ENCODE measurements at regions of chr15 and their contacts with region 1.

Region 1: DNA sequence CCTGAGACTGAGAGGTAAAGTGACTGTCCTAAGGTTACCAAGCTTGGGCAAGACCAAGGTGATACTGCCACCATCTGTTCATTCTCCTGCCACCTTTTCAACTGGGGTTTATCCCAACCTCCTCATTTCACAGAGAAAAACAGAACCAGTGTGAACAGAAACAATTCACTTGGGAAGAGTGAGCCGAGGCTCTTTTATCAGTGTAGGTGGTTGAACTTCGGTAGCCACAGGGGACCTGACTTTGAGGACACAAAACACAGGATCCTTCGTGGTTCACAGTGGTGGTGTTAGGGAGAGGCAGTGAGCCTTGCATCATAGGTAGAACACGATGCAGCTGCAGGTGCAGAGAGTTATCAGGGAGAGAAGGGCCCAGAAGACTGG is 72.8 kb upstream of the ICE2 start:
- DNase-seq: peak; percentile 49
- H3K4me3 Mint-ChIP-seq: peak overlapping the region; percentile 31
- H3K27ac Mint-ChIP-seq: peak overlapping the region; percentile 23
- H3K4me1 Mint-ChIP-seq: peaks cover 22% of the 10 kb centered on the region
- H3K27me3 Mint-ChIP-seq: no peaks in the 10 kb centered on the region
- CTCF ChIP-seq: peak; percentile 25

Region 2: GRCh38 chr15:60477916-60478565 is 73.7 kb before region 1 on chr15:
- CTCF ChIA-PET with region 1: no interaction called
- intact Hi-C with region 1: loop called (anchors 2 kb)
- DNase-seq: no peak
- H3K4me3 Mint-ChIP-seq: peak overlapping the region; percentile 98
- H3K27ac Mint-ChIP-seq: peak overlapping the region; percentile 97
- H3K4me1 Mint-ChIP-seq: peaks cover 48% of the 10 kb centered on the region
- H3K27me3 Mint-ChIP-seq: no peaks in the 10 kb centered on the region
- CTCF ChIP-seq: no peak

Region 3: GRCh38 chr15:60520825-60521368 is 30.9 kb before region 1 on chr15:
- CTCF ChIA-PET with region 1: interaction called, 10 read pairs
- intact Hi-C with region 1: no loop called
- DNase-seq: peak; percentile 82
- H3K4me3 Mint-ChIP-seq: peak overlapping the region; percentile 8
- H3K27ac Mint-ChIP-seq: peak overlapping the region; percentile 73
- H3K4me1 Mint-ChIP-seq: peaks cover 19% of the 10 kb centered on the region
- H3K27me3 Mint-ChIP-seq: no peaks in the 10 kb centered on the region
- CTCF ChIP-seq: peak; percentile 89